ENCODE measurements at regions of chr18 and their contacts with region 1.

Region 1: GRCh38 chr18:57803103-57803969 is at the start of gene ATP8B1:
- DNase-seq: peak; percentile 78
- ATAC-seq: peak; percentile 94
- H3K4me3 ChIP-seq: peak within 1 kb of the TSS; percentile 79 to 90
- H3K27ac ChIP-seq: peak within 1 kb of the TSS; percentile 84
- H3K4me1 ChIP-seq: peaks cover 18 to 38% of the 10 kb centered on the region in 2 experiments
- H3K27me3 ChIP-seq: no peaks in the 10 kb centered on the region
- CTCF ChIP-seq: no peak
- POLR2A ChIP-seq: peak; percentile 48
- RAD21 ChIP-seq: peak; percentile 51
- total RNA-seq, gene ATP8B1: 15.9 TPM

Region 2: DNA sequence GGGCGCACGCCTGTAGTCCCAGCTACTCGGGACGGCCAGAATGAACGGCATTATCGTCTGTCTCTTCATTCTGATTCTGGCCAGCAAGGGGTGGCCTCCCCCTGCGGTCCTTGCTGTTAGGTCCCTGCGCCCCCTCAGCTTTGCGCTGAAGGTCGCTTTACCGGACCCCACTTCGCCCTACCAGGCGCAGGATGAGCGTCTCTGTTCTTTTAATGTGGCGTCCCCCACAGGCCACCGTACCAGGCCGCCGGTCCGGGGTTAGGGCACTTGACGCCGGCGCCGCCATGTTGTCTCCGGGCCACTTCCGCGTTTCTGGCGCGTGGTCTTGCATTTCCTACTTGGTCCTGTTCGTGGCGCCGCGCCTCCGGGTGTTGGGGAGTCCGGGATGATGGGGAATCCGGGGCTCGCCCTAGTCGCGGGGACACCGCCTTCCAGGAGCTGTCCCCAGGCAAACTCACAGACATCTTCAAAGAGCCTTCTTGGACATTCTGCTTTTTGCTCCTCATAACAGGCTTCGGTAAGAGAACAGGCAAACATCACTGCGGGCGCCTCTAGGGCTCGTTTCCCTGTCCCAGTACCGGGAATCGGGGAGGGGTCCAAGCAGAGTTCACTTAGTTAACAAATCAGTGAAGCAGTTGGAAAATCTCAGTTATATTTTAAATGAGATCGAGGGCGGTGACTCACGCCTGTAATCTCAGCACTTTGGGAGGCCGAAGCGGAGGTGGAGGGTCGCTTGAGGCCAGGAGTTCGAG is 173.2 kb before region 1 on chr18:
- CTCF ChIA-PET with region 1: no interaction called
- POLR2A ChIA-PET with region 1: no interaction called
- RAD21 ChIA-PET with region 1: no interaction called
- intact Hi-C with region 1: loop called (anchors 2 kb)
- DNase-seq: peak; percentile 89
- ATAC-seq: peak; percentile 94
- H3K4me3 ChIP-seq: peak overlapping the region; percentile 80 to 83
- H3K27ac ChIP-seq: peak overlapping the region; percentile 65
- H3K4me1 ChIP-seq: peaks cover 0 to 20% of the 10 kb centered on the region in 2 experiments; a peak in 2 of 4 replicates
- H3K27me3 ChIP-seq: no peaks in the 10 kb centered on the region
- CTCF ChIP-seq: peak in 2 of 3 experiments; percentile 64 to 74; a peak in 4 of 6 replicates
- POLR2A ChIP-seq: peak; percentile 63
- RAD21 ChIP-seq: no peak

Region 3: GRCh38 chr18:57776767-57777166 is 26.6 kb before region 1 on chr18:
- CTCF ChIA-PET with region 1: no interaction called
- POLR2A ChIA-PET with region 1: no interaction called
- RAD21 ChIA-PET with region 1: no interaction called
- intact Hi-C with region 1: loop called (anchors 1 kb)
- DNase-seq: no peak
- ATAC-seq: no peak
- H3K4me3 ChIP-seq: no peak overlapping the region
- H3K27ac ChIP-seq: peak overlapping the region; percentile 70; the same call in 1 of the 2 replicates
- H3K4me1 ChIP-seq: peaks cover 64 to 91% of the 10 kb centered on the region in 2 experiments
- H3K27me3 ChIP-seq: no peaks in the 10 kb centered on the region
- CTCF ChIP-seq: no peak
- POLR2A ChIP-seq: no peak
- RAD21 ChIP-seq: no peak